Activated CD8-positive, alpha-beta T cell treated with anti-CD3 and anti-CD28 coated beads for 36 hours (primary cell): ENCODE measurements at regions of chr9 and their contacts with region 1.

Region 1: DNA sequence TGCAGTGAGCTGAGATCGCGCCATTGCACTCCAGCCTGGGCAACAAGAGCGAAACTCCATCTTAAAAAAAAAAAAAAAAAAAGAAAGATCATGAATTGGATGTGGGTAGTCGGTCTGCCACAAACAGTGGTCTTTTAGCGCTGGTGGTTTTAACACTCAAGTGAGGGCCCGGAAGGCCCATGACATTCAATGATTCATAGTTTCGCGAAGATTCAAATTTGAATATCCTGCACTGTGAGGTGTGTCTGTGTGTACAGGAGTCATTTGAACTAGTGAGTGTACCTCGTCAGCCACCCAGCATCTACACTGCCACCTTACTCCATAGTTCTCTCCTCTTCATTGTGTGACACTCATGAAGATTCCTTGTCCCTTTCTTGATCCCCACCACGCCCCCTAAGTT is 41.3 kb downstream of the CFAP77 start:
- DNase-seq: peak; percentile 84
- ATAC-seq: peak; percentile 99
- H3K4me3 Mint-ChIP-seq: no peak overlapping the region
- H3K27ac Mint-ChIP-seq: no peak overlapping the region
- H3K4me1 Mint-ChIP-seq: peaks cover 13% of the 10 kb centered on the region
- H3K27me3 Mint-ChIP-seq: peaks cover 37% of the 10 kb centered on the region
- CTCF ChIP-seq: no peak

Region 2: DNA sequence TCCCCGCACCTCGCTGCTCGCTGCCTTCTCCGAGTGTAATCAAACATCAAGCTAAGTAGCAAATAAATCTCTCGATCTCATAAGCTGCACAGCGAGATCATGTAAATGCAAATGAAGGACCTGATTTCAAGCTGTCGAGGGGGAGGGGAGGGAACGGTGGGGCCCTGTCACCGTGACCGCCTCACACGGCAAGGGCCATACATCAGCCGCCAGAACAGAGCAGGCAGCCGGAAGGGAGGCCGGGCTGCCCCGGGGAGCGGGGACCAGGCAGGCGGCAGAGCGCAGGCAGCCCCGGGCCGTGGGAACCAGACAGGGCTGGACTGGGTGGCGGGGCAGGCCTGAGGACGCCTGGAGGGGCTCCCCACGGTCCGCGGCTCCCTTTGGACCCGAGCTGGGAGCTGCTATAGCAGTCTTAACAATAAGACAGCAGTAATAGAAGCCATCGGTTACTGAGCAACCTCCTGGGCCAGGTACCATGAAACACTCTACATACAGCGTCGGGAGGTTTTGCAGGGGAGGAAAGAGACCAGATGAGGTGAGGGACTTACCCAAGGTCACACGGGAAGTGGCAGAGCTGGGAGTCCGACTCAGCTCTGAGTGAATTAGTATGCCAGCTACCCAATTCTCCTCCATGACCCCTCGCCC is 35.6 kb after region 1 on chr9:
- CTCF ChIA-PET with region 1: interaction called, 4 read pairs
- POLR2A ChIA-PET with region 1: interaction called, 4 read pairs
- intact Hi-C with region 1: loop called (anchors 5 kb)
- DNase-seq: peak; percentile 88
- ATAC-seq: peak; percentile 93
- H3K4me3 Mint-ChIP-seq: peak overlapping the region; percentile 42
- H3K27ac Mint-ChIP-seq: peak overlapping the region; percentile 87
- H3K4me1 Mint-ChIP-seq: peaks cover 27% of the 10 kb centered on the region
- H3K27me3 Mint-ChIP-seq: peaks cover 48% of the 10 kb centered on the region
- CTCF ChIP-seq: no peak

Region 3: GRCh38 chr9:132622159-132622558 is 170.9 kb after region 1 on chr9:
- CTCF ChIA-PET with region 1: no interaction called
- POLR2A ChIA-PET with region 1: no interaction called
- intact Hi-C with region 1: no loop called
- DNase-seq: no peak
- ATAC-seq: no peak
- H3K4me3 Mint-ChIP-seq: no peak overlapping the region
- H3K27ac Mint-ChIP-seq: no peak overlapping the region
- H3K4me1 Mint-ChIP-seq: no peaks in the 10 kb centered on the region
- H3K27me3 Mint-ChIP-seq: no peaks in the 10 kb centered on the region
- CTCF ChIP-seq: no peak